Activated B cell treated with CpG ODN at 0.5 μM for 24 hours (primary cell): ENCODE measurements at regions of chr3 and their contacts with region 1.

Region 1: GRCh38 chr3:4978204-4978965 is 852 bp upstream of the BHLHE40 start:
- DNase-seq: peak; percentile 79
- ATAC-seq: peak; percentile 49
- H3K4me3 Mint-ChIP-seq: peak overlapping the region; percentile 96
- H3K27ac Mint-ChIP-seq: peak overlapping the region; percentile 97
- H3K4me1 Mint-ChIP-seq: peaks cover 63% of the 10 kb centered on the region
- H3K27me3 Mint-ChIP-seq: no peaks in the 10 kb centered on the region
- CTCF ChIP-seq: no peak

Region 2: DNA sequence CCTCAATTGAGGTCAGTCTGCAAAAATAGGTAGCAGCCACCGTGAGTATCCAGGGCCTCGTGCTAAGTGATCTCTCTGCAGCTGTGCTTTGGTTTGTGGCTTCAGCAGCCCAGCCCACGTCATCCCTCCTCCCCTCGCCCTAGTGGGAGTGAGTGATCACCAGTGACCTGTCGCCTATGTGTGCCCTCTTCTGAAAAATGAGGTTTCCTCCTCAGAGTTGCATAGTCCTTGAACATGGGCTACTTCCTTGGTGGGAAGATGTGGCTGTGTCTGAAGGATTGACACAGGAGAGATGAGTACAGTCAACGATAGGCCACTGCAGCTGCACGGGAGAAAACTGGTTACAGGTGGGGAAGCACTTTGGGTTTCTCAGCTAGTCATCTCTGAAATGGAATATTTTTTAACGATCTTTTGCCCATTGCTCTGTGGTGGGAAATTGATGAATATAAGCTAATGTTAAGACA is 143.9 kb before region 1 on chr3:
- CTCF ChIA-PET with region 1: interaction called, 22 read pairs
- POLR2A ChIA-PET with region 1: interaction called, 55 read pairs
- intact Hi-C with region 1: loop called (anchors 1 kb)
- DNase-seq: no peak
- ATAC-seq: peak; percentile 56
- H3K4me3 Mint-ChIP-seq: no peak overlapping the region
- H3K27ac Mint-ChIP-seq: peak overlapping the region; percentile 59
- H3K4me1 Mint-ChIP-seq: peaks cover 68% of the 10 kb centered on the region
- H3K27me3 Mint-ChIP-seq: no peaks in the 10 kb centered on the region
- CTCF ChIP-seq: no peak

Region 3: DNA sequence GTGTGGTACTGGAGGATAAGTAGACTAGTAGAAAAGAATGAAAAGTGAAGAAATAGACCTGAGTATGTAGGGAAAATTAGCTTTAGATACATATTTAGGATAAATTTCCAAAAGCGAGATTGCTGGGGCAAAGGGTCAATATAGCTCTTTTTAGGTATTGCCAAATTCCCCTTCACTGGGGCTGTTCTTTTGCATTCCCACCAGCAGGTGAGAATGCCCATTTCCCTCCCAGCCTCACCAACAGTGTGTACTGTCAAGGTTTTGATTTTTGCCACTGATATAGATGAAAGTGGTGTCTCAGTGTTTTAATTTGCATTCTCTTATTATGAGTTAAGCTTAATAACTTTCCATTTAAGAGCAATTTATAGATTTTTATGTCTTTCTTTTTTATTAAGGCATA is 34.8 kb before region 1 on chr3:
- CTCF ChIA-PET with region 1: no interaction called
- POLR2A ChIA-PET with region 1: interaction called, 3 read pairs
- intact Hi-C with region 1: loop called (anchors 5 kb)
- DNase-seq: no peak
- ATAC-seq: no peak
- H3K4me3 Mint-ChIP-seq: no peak overlapping the region
- H3K27ac Mint-ChIP-seq: no peak overlapping the region
- H3K4me1 Mint-ChIP-seq: peaks cover 4% of the 10 kb centered on the region
- H3K27me3 Mint-ChIP-seq: no peaks in the 10 kb centered on the region
- CTCF ChIP-seq: no peak

Region 4: DNA sequence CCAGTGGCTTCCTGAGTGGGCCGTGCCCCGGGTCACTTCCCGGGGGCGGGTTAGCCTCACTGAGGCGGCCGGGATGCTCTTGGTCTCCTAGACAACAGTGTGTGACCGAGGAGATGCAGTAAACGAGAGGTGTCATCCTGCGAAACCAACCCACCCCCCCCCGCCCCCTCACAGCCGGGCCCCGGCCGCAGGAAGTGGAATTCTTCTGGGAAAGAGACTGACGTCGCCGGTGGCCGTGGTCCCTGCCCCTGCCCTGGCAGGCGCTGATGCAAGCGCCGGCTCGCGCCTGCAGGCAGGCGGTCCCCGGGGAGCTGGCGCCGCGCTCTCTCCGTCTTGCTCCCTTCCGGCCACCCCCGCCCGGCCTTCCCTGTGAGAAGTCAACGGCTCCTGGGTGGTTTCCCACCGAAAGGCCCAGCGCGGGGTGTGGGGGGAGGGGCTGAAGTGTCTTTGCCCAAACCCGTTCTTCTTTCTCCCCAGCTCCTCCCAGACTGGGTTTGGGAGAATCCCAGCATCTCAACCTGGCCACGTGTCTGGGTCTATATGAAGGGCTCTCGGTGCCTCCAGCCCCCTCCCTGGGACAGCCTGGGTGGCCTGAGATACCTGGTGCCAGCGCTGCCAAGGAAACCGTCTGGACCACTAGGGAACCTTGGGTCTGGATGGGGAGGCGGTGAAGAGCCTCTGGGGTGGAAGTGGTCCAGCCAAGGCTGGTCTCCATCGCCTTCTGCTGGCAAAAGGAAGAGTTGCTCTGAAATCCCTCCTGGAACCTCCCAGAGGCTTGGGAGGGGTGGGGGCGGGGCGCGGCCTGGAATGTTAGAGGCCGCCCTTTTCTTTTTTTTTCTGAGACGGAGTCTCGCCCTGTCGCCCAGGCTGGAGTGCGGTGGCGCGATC is 48.2 kb after region 1 on chr3:
- CTCF ChIA-PET with region 1: interaction called, 9 read pairs
- POLR2A ChIA-PET with region 1: interaction called, 43 read pairs
- intact Hi-C with region 1: loop called (anchors 1 kb)
- DNase-seq: peak; percentile 57
- ATAC-seq: peak; percentile 72
- H3K4me3 Mint-ChIP-seq: peak overlapping the region; percentile 84
- H3K27ac Mint-ChIP-seq: peak overlapping the region; percentile 78
- H3K4me1 Mint-ChIP-seq: peaks cover 39% of the 10 kb centered on the region
- H3K27me3 Mint-ChIP-seq: no peaks in the 10 kb centered on the region
- CTCF ChIP-seq: no peak

Region 5: GRCh38 chr3:5187156-5187919 is 209.0 kb after region 1 on chr3 and contains the start of gene EDEM1:
- CTCF ChIA-PET with region 1: no interaction called
- POLR2A ChIA-PET with region 1: interaction called, 20 read pairs
- intact Hi-C with region 1: no loop called
- DNase-seq: peak; percentile 100
- ATAC-seq: peak; percentile 88
- H3K4me3 Mint-ChIP-seq: peak within 1 kb of the TSS; percentile 98
- H3K27ac Mint-ChIP-seq: peak within 1 kb of the TSS; percentile 99
- H3K4me1 Mint-ChIP-seq: peaks cover 73% of the 10 kb centered on the region
- H3K27me3 Mint-ChIP-seq: no peaks in the 10 kb centered on the region
- CTCF ChIP-seq: no peak
- total RNA-seq, gene EDEM1: 171 and 185 TPM in 2 replicates

Region 6: DNA sequence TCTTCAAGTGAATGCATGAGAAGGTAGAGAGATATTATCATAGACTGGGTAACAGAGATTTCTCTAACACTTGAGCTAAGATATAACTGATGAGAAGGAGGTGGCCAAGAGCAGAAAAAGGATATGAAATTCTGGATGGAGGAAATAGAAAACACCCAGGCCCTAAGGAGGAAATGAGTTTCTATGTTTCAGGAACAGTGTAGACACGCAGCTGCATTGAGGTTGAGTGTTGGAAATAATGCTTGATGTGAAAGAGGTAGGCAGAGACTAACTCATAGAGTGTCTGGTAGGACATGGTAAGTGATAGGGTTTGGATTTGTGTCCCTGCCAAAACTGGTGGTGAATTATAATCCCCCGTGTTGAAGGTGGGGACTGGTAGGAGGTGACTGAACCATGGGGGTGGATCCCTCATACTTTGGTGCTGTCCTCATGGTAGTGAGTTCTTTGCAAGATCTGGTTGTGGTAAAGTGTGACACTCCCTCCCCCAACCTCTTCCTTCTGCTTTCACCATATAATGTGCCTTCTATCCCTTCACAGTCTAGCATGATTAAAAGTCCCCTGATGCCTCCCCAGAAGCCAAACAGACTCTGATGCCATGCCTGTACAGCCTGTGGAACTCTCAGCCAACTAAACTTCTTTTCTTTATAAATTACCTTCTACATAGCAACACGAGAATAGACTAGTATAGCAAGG is 996.4 kb after region 1 on chr3:
- CTCF ChIA-PET with region 1: no interaction called
- POLR2A ChIA-PET with region 1: no interaction called
- intact Hi-C with region 1: no loop called
- DNase-seq: no peak
- ATAC-seq: no peak
- H3K4me3 Mint-ChIP-seq: no peak overlapping the region
- H3K27ac Mint-ChIP-seq: no peak overlapping the region
- H3K4me1 Mint-ChIP-seq: no peaks in the 10 kb centered on the region
- H3K27me3 Mint-ChIP-seq: no peaks in the 10 kb centered on the region
- CTCF ChIP-seq: no peak